Head of caudate nucleus (tissue), 42 donors: ENCODE measurements at regions of chr2 and their contacts with region 1.

Region 1: GRCh38 chr2:41970988-41971660 is 76.7 kb upstream of the PKDCC start:
- DNase-seq: peak in 24 of 42 donors; percentile 10 to 73 (median 42)

Region 2: GRCh38 chr2:42040643-42041278 is 69.6 kb after region 1 on chr2:
- intact Hi-C with region 1: loop called (anchors 5 kb)
- DNase-seq: no peak